ENCODE measurements at regions of chr19 and their contacts with region 1.

Region 1: GRCh38 chr19:35557539-35558399 is 5.7 kb downstream of the ATP4A start:
- DNase-seq: peak; percentile 86 to 99
- H3K4me3 ChIP-seq: peak overlapping the region; percentile 52 to 65 (median 62)
- H3K27ac ChIP-seq: no peak overlapping the region
- H3K4me1 ChIP-seq: peaks cover 0 to 6% (median 4%) of the 10 kb centered on the region in 4 experiments; a peak in 3 of 7 replicates
- H3K27me3 ChIP-seq: peaks cover 0 to 16% (median 12%) of the 10 kb centered on the region in 4 experiments; a peak in 5 of 7 replicates
- CTCF ChIP-seq: peak in 2 of 3 experiments; percentile 4 to 18; a peak in 1 of 4 replicates
- EP300 ChIP-seq: no peak
- POLR2A ChIP-seq: peak in 1 of 2 experiments; percentile 65; a peak in 1 of 3 replicates
- RAD21 ChIP-seq: peak in 1 of 2 experiments; percentile 12; a peak in 2 of 4 replicates

Region 2: DNA sequence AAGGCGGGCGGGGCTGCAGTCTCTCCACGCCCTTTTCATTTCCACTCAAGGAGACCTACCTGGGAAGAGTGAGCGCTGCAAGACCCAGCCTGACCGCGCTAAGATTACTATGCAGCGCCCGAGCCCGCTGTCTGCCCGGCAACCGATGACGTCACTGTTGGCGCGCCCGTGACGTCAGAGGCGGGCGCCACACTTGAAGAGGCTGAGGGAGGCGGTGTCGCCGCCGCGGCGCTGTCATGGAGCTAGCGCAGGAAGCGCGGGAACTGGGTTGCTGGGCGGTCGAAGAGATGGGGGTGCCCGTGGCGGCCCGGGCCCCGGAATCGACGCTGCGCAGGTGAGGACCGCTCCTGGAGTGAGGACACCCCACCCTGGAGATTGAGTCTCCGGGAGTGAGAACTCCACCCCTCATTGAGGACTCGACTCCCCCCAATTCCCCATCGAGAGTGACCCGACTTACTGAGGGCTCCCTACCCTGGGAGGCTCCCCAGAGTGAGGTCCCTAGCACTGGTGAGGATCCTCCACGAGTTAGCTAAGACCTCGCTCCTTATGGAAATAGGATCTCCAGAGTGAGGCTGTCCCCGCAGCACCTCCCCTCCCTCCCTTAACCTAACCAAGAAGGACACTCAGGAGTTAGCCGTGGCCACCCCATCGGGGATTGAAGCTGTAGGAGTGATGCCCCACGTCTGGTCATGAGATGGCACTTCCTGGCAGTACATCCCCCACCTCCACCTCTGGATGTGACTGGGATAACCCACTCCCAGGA is 55.0 kb after region 1 on chr19 and contains the start of gene HAUS5:
- CTCF ChIA-PET with region 1: interaction called, 38 read pairs
- POLR2A ChIA-PET with region 1: interaction called, 5 read pairs
- DNase-seq: peak; percentile 81 to 99
- H3K4me3 ChIP-seq: peak within 1 kb of the TSS; percentile 84 to 90 (median 86)
- H3K27ac ChIP-seq: peak within 1 kb of the TSS; percentile 78
- H3K4me1 ChIP-seq: peaks cover 0 to 4% (median 2%) of the 10 kb centered on the region in 4 experiments; a peak in 4 of 7 replicates
- H3K27me3 ChIP-seq: peaks cover 0 to 3% (median 0%) of the 10 kb centered on the region in 4 experiments; a peak in 1 of 7 replicates
- CTCF ChIP-seq: no peak
- EP300 ChIP-seq: no peak
- POLR2A ChIP-seq: peak in 1 of 2 experiments; percentile 90; a peak in 2 of 3 replicates
- RAD21 ChIP-seq: peak in 1 of 2 experiments; percentile 12; a peak in 1 of 4 replicates
- total RNA-seq, gene HAUS5: 18.9 and 25.7 TPM in 2 replicates

Region 3: DNA sequence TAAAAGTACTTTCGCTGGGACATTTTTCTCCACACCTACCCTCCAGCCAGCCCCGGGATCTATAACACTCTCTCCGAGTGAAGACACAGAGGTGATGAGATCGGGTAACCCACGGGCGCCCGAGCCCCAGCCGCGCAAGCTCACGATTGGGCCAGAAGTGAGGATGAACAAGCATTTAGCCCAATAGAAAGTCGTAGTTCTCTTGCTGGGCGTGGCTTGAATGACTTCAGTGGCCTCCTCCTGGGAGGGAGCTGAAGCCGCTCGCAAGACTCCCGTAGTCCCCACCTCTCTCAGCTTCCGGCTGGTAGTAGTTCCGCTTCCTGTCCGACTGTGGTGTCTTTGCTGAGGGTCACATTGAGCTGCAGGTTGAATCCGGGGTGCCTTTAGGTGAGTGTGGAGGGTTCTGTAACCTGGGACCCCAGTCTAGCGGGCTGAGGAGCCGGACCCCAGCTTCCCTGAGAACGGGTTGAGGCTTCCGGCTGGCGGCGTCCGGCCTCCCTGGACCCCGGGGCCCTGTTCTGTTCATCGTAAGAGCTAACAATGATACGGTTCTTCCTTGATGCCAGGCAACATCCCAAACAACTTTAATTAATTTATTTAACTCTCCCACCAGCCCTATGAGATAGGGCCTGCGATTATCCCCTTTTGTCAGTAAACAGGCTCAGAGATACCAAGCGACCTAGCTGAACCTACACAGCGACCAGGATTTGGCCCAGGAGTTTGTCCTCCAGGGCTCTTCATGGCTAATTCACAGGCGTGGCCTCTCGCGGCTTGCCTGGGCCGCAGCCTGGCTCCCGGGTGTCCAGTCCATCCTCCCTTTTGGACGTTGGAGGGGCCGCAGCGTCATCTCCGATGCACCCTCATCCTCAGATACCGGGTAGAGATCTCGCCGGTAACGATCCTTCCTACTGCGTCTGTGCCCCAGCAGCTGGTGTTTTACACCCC is 90.5 kb after region 1 on chr19 and contains the start of gene COX6B1:
- CTCF ChIA-PET with region 1: interaction called, 17 read pairs
- POLR2A ChIA-PET with region 1: interaction called, 6 read pairs
- DNase-seq: peak; percentile 84 to 88
- H3K4me3 ChIP-seq: peak within 1 kb of the TSS; percentile 62 to 98 (median 92)
- H3K27ac ChIP-seq: peak within 1 kb of the TSS; percentile 44; the same call in 1 of the 2 replicates
- H3K4me1 ChIP-seq: peaks cover 2 to 11% (median 4%) of the 10 kb centered on the region in 4 experiments; a peak in 5 of 7 replicates
- H3K27me3 ChIP-seq: no peaks in the 10 kb centered on the region; a peak in 3 of 7 replicates
- CTCF ChIP-seq: no peak
- EP300 ChIP-seq: no peak
- POLR2A ChIP-seq: peak; percentile 49 to 83
- RAD21 ChIP-seq: no peak
- total RNA-seq, gene COX6B1: 436 and 437 TPM in 2 replicates

Measured in H1 (cell line).